Endothelial cell of umbilical vein (primary cell): ENCODE measurements at regions of chr10 and their contacts with region 1.

Region 1: GRCh38 chr10:113126229-113127201 is 176.5 kb downstream of the TCF7L2 start:
- DNase-seq: peak; percentile 76
- H3K4me3 ChIP-seq: peak overlapping the region in 1 of 3 experiments; percentile 44
- H3K27ac ChIP-seq: no peak overlapping the region
- H3K4me1 ChIP-seq: peaks cover 4% of the 10 kb centered on the region
- H3K27me3 ChIP-seq: no peaks in the 10 kb centered on the region
- CTCF ChIP-seq: peak; percentile 56 to 77
- POLR2A ChIP-seq: no peak

Region 2: GRCh38 chr10:112471878-112472487 is 654.5 kb before region 1 on chr10:
- CTCF ChIA-PET with region 1: interaction called, 5 read pairs
- POLR2A ChIA-PET with region 1: no interaction called
- dilution Hi-C with region 1: no loop called
- intact Hi-C with region 1: loop called (anchors 1 kb)
- DNase-seq: peak; percentile 66
- H3K4me3 ChIP-seq: no peak overlapping the region
- H3K27ac ChIP-seq: no peak overlapping the region
- H3K4me1 ChIP-seq: no peaks in the 10 kb centered on the region
- H3K27me3 ChIP-seq: no peaks in the 10 kb centered on the region
- CTCF ChIP-seq: peak; percentile 44 to 45
- POLR2A ChIP-seq: no peak

Region 3: GRCh38 chr10:112689299-112690072 is 437.0 kb before region 1 on chr10:
- CTCF ChIA-PET with region 1: no interaction called
- POLR2A ChIA-PET with region 1: no interaction called
- dilution Hi-C with region 1: no loop called
- intact Hi-C with region 1: loop called (anchors 1 kb)
- DNase-seq: peak; percentile 11
- H3K4me3 ChIP-seq: no peak overlapping the region
- H3K27ac ChIP-seq: no peak overlapping the region
- H3K4me1 ChIP-seq: no peaks in the 10 kb centered on the region
- H3K27me3 ChIP-seq: no peaks in the 10 kb centered on the region
- CTCF ChIP-seq: peak in 1 of 2 donors; percentile 23
- POLR2A ChIP-seq: no peak

Region 4: GRCh38 chr10:113052076-113052830 is 74.3 kb before region 1 on chr10:
- CTCF ChIA-PET with region 1: no interaction called
- POLR2A ChIA-PET with region 1: no interaction called
- dilution Hi-C with region 1: no loop called
- intact Hi-C with region 1: loop called (anchors 1 kb)
- DNase-seq: no peak
- H3K4me3 ChIP-seq: no peak overlapping the region
- H3K27ac ChIP-seq: no peak overlapping the region
- H3K4me1 ChIP-seq: peaks cover 40% of the 10 kb centered on the region
- H3K27me3 ChIP-seq: no peaks in the 10 kb centered on the region
- CTCF ChIP-seq: peak; percentile 21 to 24
- POLR2A ChIP-seq: no peak

Region 5: DNA sequence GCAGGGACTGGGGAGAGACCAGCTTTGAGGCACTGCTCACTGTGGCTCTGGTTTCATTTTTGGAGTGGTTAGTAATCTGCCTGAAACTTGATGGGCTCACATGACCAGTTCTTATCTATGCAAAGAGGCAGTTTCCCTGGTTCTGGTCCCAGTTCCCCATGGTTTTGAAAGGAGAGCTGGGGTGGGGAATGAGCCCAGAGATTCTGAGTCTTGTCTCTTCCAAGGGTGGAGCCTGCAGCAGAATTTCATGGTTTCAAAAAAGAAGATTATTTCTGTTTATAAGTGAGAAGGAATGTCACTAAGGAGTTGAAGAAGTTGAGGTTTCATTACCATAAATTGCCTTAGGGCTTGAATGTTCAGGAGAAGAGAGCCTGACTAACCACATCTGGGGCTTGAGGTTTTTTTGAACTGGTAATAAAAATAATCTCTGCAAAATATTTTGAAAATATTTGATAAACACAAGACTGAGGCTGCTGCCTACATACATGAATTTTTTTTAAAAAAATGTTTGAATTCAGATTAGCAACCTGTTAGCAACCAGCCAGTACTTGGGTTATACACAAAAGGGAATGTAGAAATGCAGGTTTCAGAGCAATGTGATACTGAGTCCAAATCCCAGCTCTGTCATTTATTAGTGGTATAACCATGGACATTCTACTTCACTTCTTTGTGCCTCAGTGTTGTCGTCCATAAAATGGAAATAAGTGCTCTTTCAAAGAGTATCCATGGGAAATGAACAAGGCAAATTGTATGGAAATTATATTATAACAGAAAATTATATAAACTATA is 236.3 kb after region 1 on chr10:
- CTCF ChIA-PET with region 1: no interaction called
- POLR2A ChIA-PET with region 1: no interaction called
- dilution Hi-C with region 1: no loop called
- intact Hi-C with region 1: no loop called
- DNase-seq: no peak
- H3K4me3 ChIP-seq: no peak overlapping the region
- H3K27ac ChIP-seq: no peak overlapping the region
- H3K4me1 ChIP-seq: no peaks in the 10 kb centered on the region
- H3K27me3 ChIP-seq: peaks cover 6 to 7% of the 10 kb centered on the region in 2 experiments
- CTCF ChIP-seq: no peak
- POLR2A ChIP-seq: no peak

Region 6: DNA sequence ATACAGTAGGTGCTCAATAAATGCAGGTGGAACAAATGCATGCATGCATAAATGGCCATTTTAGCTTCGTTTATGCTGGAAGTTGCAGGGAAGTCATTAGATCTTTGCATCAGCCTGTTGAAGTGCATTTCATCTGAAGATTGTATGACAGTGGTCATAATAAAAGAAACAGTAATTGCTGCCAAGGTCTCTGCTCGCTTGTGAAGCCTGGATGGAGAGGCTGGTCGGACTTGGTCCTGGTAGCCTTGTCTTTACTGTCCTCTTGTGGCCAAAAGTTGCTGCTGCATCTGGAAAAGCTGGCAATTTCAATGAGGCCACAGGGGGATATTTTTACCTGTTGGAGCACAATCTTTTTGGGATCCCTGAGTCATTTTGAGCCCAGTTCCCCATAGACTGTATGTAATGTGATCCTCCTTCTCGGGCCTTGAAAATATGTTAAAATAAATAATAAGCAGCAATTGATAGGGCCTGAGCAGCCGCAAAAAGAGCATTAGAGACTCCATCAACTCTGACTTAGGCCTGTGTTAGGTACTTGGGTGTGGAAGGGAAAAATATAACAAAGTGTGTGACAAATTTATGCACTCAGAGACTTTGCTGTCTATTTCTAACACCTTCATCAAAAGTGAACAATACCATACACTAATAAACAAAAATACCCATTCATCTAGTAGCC is 394.7 kb after region 1 on chr10:
- CTCF ChIA-PET with region 1: no interaction called
- POLR2A ChIA-PET with region 1: no interaction called
- dilution Hi-C with region 1: no loop called
- intact Hi-C with region 1: loop called (anchors 5 kb)
- DNase-seq: peak; percentile 73
- H3K4me3 ChIP-seq: no peak overlapping the region
- H3K27ac ChIP-seq: no peak overlapping the region
- H3K4me1 ChIP-seq: no peaks in the 10 kb centered on the region
- H3K27me3 ChIP-seq: peaks cover 0 to 1% of the 10 kb centered on the region in 2 experiments
- CTCF ChIP-seq: peak; percentile 92 to 95
- POLR2A ChIP-seq: no peak